PC-9 (cell line): ENCODE measurements at regions of chr4 and their contacts with region 1.

Region 1: GRCh38 chr4:15451866-15452765 is 17.6 kb upstream of the CC2D2A start:
- DNase-seq: peak; percentile 20 to 77
- H3K4me3 ChIP-seq: no peak overlapping the region
- H3K27ac ChIP-seq: no peak overlapping the region
- H3K4me1 ChIP-seq: peaks cover 12% of the 10 kb centered on the region; the same call in 1 of the 2 replicates
- H3K27me3 ChIP-seq: no peaks in the 10 kb centered on the region
- CTCF ChIP-seq: no peak

Region 2: GRCh38 chr4:15244354-15244753 is 207.8 kb before region 1 on chr4:
- CTCF ChIA-PET with region 1: no interaction called
- POLR2A ChIA-PET with region 1: no interaction called
- intact Hi-C with region 1: loop called (anchors 2 kb)
- DNase-seq: peak in 1 of 2 experiments; percentile 17
- H3K4me3 ChIP-seq: no peak overlapping the region
- H3K27ac ChIP-seq: no peak overlapping the region
- H3K4me1 ChIP-seq: no peaks in the 10 kb centered on the region
- H3K27me3 ChIP-seq: no peaks in the 10 kb centered on the region
- CTCF ChIP-seq: no peak